SK-N-SH (cell line): ENCODE measurements at regions of chr17 and their contacts with region 1.

Region 1: DNA sequence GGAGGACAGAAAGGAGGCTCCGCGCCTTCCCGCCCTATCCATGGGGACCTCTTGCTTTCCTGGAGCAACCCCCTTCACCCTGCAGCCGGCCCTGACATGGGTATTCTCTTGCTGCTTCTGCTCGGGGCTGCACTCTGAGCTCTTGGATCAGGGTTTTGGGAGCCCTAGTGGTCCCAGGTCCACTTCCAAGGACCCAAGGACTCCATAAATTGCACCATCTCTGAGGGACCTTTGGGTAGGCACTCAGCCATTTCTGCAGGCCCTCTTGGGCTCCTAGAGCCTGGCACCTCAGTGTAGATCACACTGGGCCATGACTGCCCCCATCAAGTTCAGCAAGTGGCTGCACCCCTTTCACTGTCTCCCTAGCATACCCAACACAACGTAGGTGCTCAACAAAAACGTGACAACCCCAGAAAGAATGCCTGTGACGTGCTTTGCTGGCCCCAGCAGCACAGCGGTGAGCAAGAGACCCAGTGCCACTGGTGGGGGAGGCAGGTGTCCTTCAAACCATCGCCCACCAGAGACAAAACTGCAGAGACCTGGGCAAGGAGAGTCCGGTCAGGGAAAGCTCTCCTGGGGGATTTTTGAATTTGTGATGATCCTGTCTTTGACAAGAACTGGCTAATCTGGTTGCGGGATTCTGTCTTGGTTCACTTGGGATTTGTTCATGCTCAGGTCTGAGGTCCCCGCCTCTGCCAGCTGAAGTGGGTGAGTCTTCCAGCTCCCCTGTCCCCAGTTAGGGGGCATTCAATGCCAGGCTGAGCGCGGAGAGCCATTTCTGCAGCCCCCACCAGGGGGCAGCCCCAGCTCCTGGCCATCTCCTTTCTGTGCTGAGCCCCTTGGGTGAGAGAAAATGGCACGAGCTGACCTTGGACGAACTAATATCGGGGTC is 2.5 kb upstream of the RAB11FIP4 start:
- DNase-seq: peak; percentile 83
- H3K4me3 ChIP-seq: no peak overlapping the region; a peak in 1 of 4 replicates
- H3K27ac ChIP-seq: no peak overlapping the region
- H3K4me1 ChIP-seq: peaks cover 0 to 29% of the 10 kb centered on the region in 2 experiments; a peak in 2 of 4 replicates
- H3K27me3 ChIP-seq: no peaks in the 10 kb centered on the region
- CTCF ChIP-seq: peak; percentile 74
- EP300 ChIP-seq: no peak
- RAD21 ChIP-seq: peak; percentile 77

Region 2: GRCh38 chr17:31294820-31295488 is 94.1 kb before region 1 on chr17:
- CTCF ChIA-PET with region 1: no interaction called
- POLR2A ChIA-PET with region 1: no interaction called
- DNase-seq: no peak
- H3K4me3 ChIP-seq: no peak overlapping the region
- H3K27ac ChIP-seq: no peak overlapping the region
- H3K4me1 ChIP-seq: no peaks in the 10 kb centered on the region; a peak in 1 of 4 replicates
- H3K27me3 ChIP-seq: no peaks in the 10 kb centered on the region
- CTCF ChIP-seq: no peak
- EP300 ChIP-seq: no peak
- RAD21 ChIP-seq: no peak

Region 3: GRCh38 chr17:31378638-31379037 is 10.4 kb before region 1 on chr17:
- CTCF ChIA-PET with region 1: interaction called, 26 read pairs
- POLR2A ChIA-PET with region 1: no interaction called
- DNase-seq: no peak
- H3K4me3 ChIP-seq: no peak overlapping the region
- H3K27ac ChIP-seq: no peak overlapping the region
- H3K4me1 ChIP-seq: no peaks in the 10 kb centered on the region; a peak in 1 of 4 replicates
- H3K27me3 ChIP-seq: no peaks in the 10 kb centered on the region
- CTCF ChIP-seq: peak; percentile 32; the same call in 1 of the 2 replicates
- EP300 ChIP-seq: no peak
- RAD21 ChIP-seq: no peak

Region 4: DNA sequence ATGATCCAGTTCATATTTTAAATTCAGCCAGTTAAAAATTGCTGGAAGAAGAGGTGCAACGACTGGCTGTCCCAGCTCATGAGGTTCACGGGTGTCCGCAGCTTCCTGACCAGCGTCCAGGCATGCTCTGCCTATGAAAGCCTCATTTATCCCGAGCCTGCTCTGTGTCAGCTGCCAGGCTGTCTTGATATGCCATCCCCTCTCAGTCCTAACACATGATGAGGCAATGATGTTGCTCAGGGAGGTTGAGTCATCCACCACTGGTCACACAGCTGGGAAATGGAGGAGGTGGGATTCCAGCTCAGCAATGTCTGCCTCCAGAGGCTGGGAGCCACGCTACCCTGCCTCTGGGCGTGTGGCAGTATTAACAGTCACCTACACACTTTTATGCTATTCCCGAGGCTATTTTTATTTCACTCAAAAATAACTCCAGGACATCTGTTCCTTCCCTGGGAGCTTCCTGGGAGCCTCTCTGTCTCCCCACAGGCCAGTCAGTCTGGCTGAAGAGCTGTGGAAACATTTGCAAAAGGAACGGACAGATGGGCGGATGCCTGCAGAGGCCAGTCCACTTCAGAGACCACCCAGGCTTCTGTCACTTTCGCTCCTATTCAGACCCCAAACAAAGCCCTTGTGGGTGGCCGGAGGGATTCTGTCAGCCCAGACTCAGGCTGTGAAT is 25.0 kb after region 1 on chr17:
- CTCF ChIA-PET with region 1: interaction called, 12 read pairs
- POLR2A ChIA-PET with region 1: no interaction called
- DNase-seq: no peak
- H3K4me3 ChIP-seq: no peak overlapping the region
- H3K27ac ChIP-seq: no peak overlapping the region
- H3K4me1 ChIP-seq: peaks cover 0 to 33% of the 10 kb centered on the region in 2 experiments; a peak in 1 of 4 replicates
- H3K27me3 ChIP-seq: no peaks in the 10 kb centered on the region
- CTCF ChIP-seq: no peak
- EP300 ChIP-seq: no peak
- RAD21 ChIP-seq: no peak

Region 5: GRCh38 chr17:31437720-31438420 is 48.9 kb after region 1 on chr17:
- CTCF ChIA-PET with region 1: interaction called, 17 read pairs
- POLR2A ChIA-PET with region 1: no interaction called
- DNase-seq: no peak
- H3K4me3 ChIP-seq: no peak overlapping the region
- H3K27ac ChIP-seq: no peak overlapping the region
- H3K4me1 ChIP-seq: no peaks in the 10 kb centered on the region; a peak in 1 of 4 replicates
- H3K27me3 ChIP-seq: no peaks in the 10 kb centered on the region
- CTCF ChIP-seq: no peak
- EP300 ChIP-seq: no peak
- RAD21 ChIP-seq: no peak

Region 6: GRCh38 chr17:31517524-31517923 is 128.5 kb after region 1 on chr17:
- CTCF ChIA-PET with region 1: interaction called, 127 read pairs
- POLR2A ChIA-PET with region 1: interaction called, 4 read pairs
- DNase-seq: peak; percentile 80
- H3K4me3 ChIP-seq: no peak overlapping the region
- H3K27ac ChIP-seq: no peak overlapping the region; a peak in 1 of 4 replicates
- H3K4me1 ChIP-seq: peaks cover 0 to 27% of the 10 kb centered on the region in 2 experiments; a peak in 1 of 4 replicates
- H3K27me3 ChIP-seq: no peaks in the 10 kb centered on the region
- CTCF ChIP-seq: peak; percentile 41
- EP300 ChIP-seq: no peak
- RAD21 ChIP-seq: peak; percentile 79

Region 7: DNA sequence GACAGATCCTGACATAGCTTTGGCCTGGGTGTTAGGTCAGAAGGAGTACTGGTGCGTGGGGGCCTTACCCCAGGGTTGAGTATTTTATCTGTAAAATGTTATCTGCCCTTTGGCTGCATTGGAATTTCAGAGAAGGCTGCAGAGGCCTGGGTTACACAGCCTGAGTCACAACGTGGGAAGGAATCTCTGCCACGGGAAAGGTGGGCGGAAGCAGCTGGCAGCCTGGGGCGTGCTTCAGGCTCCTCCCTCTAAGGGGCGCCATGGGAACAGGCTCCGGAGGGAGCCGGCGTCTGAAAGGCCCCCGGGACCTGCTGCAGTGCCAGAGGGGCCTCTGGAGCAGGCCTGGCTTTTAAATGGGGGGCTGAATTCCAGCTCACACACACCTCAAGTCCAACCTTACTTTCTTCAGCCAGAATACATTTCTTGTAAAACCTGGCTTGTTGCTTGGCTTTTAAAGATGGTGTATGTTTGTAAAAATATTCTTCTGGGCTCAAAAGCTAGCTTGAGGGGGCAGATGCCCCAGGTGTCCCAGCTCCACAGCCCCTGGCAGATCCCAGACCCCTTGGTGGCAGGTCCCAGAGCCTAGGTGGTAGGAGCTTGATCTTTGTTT is 144.6 kb after region 1 on chr17:
- CTCF ChIA-PET with region 1: interaction called, 16 read pairs
- POLR2A ChIA-PET with region 1: no interaction called
- DNase-seq: peak; percentile 81
- H3K4me3 ChIP-seq: no peak overlapping the region
- H3K27ac ChIP-seq: peak overlapping the region in 1 of 2 experiments; percentile 66; a peak in 2 of 4 replicates
- H3K4me1 ChIP-seq: peaks cover 11 to 16% of the 10 kb centered on the region in 2 experiments; a peak in 3 of 4 replicates
- H3K27me3 ChIP-seq: no peaks in the 10 kb centered on the region
- CTCF ChIP-seq: peak; percentile 55
- EP300 ChIP-seq: no peak; a peak in 1 of 4 replicates
- RAD21 ChIP-seq: peak; percentile 67

Region 8: DNA sequence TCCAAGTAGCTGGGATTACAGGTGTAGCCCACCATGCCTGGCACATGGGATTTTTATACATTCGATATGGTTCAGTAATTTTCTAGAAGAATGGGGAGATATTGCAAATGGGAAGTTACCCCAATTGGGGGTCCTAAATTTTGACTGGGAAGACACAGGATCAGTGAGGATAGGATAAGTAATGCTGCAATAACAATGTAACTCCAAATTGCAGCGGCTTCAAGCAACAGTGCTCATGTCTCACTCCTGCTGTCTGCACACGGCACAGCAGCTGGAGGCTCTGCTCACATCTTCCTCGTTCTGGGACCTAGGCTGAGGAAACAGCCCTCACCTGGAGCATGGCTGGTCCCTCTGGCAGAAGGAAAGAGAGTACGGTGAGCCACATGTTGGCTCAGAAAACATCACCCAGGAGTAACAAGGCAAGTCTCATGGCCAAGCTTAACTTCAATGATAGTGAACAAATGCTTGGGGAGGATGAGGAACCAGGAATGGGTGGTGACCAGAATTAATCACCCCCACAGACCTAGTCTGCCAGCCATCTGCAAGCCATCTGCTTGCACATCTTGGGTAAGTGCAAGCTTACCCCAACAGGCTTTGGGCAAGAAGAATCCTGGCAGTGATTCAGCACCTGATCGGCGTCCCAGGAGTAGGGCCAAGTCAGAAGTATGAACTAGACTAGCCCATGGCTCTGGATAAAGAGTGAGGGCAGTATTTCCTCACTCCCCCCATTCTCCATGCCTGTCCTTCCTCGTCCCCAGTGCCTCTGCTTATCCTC is 240.9 kb after region 1 on chr17:
- CTCF ChIA-PET with region 1: no interaction called
- POLR2A ChIA-PET with region 1: no interaction called
- DNase-seq: no peak
- H3K4me3 ChIP-seq: no peak overlapping the region
- H3K27ac ChIP-seq: no peak overlapping the region
- H3K4me1 ChIP-seq: peaks cover 0 to 6% of the 10 kb centered on the region in 2 experiments; a peak in 2 of 4 replicates
- H3K27me3 ChIP-seq: no peaks in the 10 kb centered on the region
- CTCF ChIP-seq: no peak
- EP300 ChIP-seq: peak in 1 of 2 experiments; percentile 47; a peak in 1 of 4 replicates
- RAD21 ChIP-seq: no peak